ENCODE measurements at regions of chr2 and their contacts with region 1.

Region 1: DNA sequence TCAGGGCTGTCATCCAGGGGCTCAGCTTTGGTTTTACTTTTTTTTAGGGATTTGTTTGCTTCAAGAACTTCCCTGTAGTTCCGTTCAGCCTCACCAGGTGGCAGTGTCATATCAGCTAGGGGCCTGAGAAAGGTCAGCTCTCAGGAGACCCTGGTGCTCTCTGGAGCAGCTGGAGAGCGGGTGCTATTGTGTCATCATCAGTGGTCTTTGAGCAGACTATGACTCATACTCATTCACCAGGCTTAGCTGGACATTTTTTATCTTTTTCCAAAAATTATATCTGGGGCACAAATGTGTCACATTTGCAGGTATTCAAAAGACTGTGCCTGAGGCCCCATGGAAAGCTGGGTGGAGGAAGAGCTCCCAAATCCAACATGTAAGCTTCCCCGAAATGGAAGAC is 24.4 kb downstream of the ZNF892 start:
- DNase-seq: peak; percentile 44
- ATAC-seq: peak; percentile 53

Region 2: DNA sequence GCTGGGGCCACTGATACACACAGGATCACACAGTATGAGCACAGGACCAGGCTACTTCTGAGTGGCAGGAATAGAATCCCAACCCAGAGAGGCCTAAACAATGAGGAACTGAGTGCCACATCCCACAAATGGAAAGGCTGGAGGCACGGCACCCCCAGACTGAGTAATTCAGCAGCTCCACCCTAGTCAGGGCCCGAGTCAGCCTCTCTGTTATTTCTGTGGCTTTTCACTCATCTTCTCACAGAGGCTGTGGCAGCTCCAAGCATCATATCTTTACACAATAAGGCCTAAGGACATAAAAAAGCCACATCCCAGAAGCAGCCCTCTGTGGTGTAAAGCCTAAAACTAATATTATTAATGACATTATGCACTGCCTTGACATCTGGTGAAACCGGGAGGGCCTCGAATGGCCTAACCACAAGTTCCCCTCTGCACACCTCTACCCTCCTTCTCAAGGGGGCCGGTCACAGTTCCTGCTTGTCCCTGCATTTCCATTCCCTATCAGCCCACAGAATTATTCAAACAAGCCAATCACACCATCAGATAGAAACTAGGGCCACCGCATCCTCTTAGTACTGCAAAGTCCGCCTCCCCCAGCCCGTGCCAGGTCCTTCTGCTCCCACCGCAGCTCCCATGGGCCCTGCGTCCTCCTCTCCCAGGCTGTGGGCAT is 218.7 kb before region 1 on chr2:
- intact Hi-C with region 1: no loop called
- DNase-seq: no peak
- ATAC-seq: no peak

Region 3: GRCh38 chr2:95313355-95314131 is 81.8 kb after region 1 on chr2:
- intact Hi-C with region 1: loop called (anchors 2 kb)
- DNase-seq: no peak
- ATAC-seq: no peak